Sigmoid colon (tissue), 7 donors: ENCODE measurements at regions of chr6 and their contacts with region 1.

Region 1: GRCh38 chr6:15621203-15622044 is 41.4 kb downstream of the DTNBP1 start:
- DNase-seq: peak; percentile 68
- H3K4me3 ChIP-seq: no peak overlapping the region
- H3K27ac ChIP-seq: peak overlapping the region in 3 of 4 donors; percentile 36 to 47 (median 39)
- H3K4me1 ChIP-seq: peaks cover 0 to 28% (median 15%) of the 10 kb centered on the region in 4 donors
- H3K27me3 ChIP-seq: no peaks in the 10 kb centered on the region
- CTCF ChIP-seq: no peak
- EP300 ChIP-seq: no peak
- POLR2A ChIP-seq: no peak

Region 2: DNA sequence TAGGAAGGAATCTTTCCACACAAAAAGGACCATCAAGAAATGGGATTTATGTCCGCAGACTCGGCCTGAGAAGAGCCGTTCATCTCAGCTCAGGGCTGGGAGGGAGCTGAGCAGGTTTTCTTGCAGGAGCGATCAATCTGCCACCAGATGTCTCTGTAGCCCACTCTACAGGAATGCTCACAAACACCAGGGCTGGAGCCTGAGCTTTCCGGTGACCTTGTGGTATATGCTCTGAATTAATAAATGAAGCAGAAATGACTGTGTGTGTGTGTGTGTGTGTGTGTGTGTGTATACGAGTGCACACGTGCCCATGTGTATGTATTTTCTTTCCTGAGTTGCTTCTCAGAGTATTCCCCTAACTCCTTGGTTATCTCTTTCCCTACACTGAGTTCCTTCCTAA is 1491.8 kb before region 1 on chr6:
- intact Hi-C with region 1: loop called (anchors 5 kb)
- DNase-seq: peak; percentile 67
- H3K4me3 ChIP-seq: no peak overlapping the region
- H3K27ac ChIP-seq: no peak overlapping the region
- H3K4me1 ChIP-seq: peaks cover 0 to 19% (median 15%) of the 10 kb centered on the region in 4 donors
- H3K27me3 ChIP-seq: no peaks in the 10 kb centered on the region
- CTCF ChIP-seq: peak in 3 of 4 experiments; percentile 33 to 52 (median 43)
- EP300 ChIP-seq: no peak
- POLR2A ChIP-seq: no peak

Region 3: DNA sequence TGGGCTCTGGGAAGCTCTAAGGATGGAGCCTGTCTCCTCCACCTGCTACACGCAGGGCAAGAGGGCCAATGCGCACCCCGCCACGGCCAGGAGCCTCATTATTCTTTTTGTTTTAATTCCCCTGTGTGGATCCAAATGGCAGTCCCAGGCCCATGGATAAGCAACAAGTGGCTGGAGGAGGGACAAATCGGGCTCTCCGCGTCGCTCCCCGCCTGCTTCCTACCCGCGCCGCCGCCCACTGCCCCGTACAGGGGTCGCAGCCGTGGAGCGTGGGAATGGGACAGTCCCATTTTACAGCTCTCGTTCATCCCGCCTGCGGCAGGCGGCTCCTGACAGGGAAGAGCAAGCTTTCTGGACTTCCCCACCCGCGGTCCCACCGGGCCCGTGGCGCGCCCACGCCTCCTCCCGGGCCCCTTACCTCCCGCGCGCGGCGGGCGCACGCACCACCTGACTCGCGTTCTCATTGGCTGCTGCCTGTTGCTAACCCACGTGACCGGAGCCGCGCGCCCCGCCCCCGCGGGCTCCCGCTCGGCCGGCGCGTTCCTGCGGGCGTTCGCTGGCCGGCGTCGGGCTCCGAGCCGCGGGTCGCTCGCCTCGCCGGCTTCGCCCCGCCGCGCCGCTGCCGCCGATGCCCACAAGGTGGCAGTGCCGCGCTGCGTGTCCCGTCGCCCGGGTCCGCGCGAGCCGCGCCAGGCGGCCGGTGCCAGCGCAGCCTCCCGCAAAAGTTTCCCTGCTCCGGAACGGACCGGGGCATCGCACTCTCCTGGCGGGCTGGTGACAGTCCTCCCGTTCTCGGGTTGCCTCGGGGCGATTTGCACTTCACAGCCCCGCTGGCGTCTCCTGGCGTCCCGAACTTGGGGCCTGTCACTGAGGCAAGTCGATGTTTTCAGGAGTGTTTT is 1410.5 kb before region 1 on chr6:
- intact Hi-C with region 1: loop called (anchors 2 kb)
- DNase-seq: peak; percentile 96
- H3K4me3 ChIP-seq: peak overlapping the region; percentile 62 to 72 (median 70)
- H3K27ac ChIP-seq: peak overlapping the region; percentile 76 to 84 (median 82)
- H3K4me1 ChIP-seq: peaks cover 0 to 14% (median 9%) of the 10 kb centered on the region in 4 donors
- H3K27me3 ChIP-seq: no peaks in the 10 kb centered on the region
- CTCF ChIP-seq: peak in 2 of 4 experiments; percentile 45 to 62
- EP300 ChIP-seq: peak in 1 of 4 donors; percentile 7
- POLR2A ChIP-seq: peak in 1 of 2 donors; percentile 42

Region 4: DNA sequence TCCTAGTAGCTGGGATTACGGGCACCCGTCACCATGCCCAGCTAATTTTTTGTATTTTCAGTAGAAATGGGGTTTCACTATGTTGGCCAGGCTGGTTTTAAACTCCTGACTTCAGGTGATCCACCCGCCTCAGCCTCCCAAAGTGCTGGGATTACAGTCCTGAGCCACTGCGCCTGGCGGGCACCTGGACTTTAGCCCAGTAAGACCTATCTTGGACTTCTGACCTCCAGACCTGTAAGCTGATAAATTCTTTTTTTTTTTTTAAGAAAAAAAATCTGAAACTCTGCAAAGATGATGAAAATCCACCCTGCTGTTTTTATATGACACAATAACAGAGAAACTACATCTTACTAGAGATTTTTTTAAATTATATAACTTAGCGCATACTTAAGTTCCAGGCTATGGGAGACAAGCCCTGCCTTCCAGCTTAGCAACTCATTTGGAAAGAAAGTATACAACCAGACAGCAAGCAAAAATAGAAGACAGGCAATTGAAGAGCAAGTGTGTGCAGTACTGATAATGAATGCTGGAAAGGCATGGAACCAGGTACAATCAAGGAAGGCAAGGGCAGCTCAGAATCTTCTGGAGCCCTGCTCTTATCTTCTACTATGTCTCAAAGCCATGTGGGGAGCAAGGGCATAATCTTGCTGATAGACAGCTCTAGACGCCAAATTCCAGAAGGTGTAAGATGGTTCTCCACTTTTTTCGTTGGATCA is 1399.7 kb before region 1 on chr6:
- intact Hi-C with region 1: no loop called
- DNase-seq: no peak
- H3K4me3 ChIP-seq: no peak overlapping the region
- H3K27ac ChIP-seq: no peak overlapping the region
- H3K4me1 ChIP-seq: no peaks in the 10 kb centered on the region
- H3K27me3 ChIP-seq: no peaks in the 10 kb centered on the region
- CTCF ChIP-seq: no peak
- EP300 ChIP-seq: no peak
- POLR2A ChIP-seq: no peak

Region 5: GRCh38 chr6:15254070-15254841 is 367.2 kb before region 1 on chr6:
- intact Hi-C with region 1: loop called (anchors 10 kb)
- DNase-seq: no peak
- H3K4me3 ChIP-seq: no peak overlapping the region
- H3K27ac ChIP-seq: no peak overlapping the region
- H3K4me1 ChIP-seq: peaks cover 0 to 49% (median 44%) of the 10 kb centered on the region in 4 donors
- H3K27me3 ChIP-seq: no peaks in the 10 kb centered on the region
- CTCF ChIP-seq: no peak
- EP300 ChIP-seq: no peak
- POLR2A ChIP-seq: no peak

Region 6: DNA sequence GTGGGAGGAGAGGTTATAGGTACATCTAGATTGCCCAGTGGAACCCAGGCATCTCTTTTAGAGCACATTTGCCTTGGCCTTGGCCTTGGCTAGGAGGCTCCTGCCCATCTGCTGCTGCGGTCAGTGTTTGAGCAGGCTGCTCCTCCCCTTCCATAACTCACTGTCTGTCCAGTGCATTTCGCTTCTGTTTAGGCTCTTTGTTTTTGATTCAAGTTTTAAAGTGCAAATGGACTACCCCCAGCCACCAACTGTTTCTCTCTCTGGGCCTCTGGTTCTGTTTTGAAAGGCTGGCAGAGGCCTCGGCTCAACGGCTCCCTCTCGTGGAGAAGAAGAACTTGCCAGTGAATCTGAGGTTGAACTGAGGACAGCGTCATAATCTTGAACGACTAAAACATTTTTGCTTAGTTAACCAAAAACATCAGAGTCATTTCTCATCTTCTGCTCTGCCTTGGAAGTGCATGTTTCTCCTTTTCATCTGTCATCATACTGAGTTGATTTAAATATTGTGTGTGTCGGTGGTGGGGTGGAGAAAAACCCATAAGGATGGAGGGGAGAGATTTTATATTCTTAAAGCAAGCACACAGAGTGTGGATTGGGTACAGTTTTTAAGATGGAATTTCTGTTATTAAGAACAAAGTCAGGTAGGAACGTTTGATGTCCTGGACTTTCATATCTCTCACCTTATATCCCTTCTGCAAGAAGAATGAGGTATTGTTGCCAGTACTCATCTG is 130.0 kb before region 1 on chr6:
- intact Hi-C with region 1: loop called (anchors 5 kb)
- DNase-seq: peak; percentile 90
- H3K4me3 ChIP-seq: no peak overlapping the region
- H3K27ac ChIP-seq: peak overlapping the region; percentile 4 to 51 (median 32)
- H3K4me1 ChIP-seq: peaks cover 0 to 28% (median 22%) of the 10 kb centered on the region in 4 donors
- H3K27me3 ChIP-seq: no peaks in the 10 kb centered on the region
- CTCF ChIP-seq: peak; percentile 73 to 94 (median 80)
- EP300 ChIP-seq: no peak
- POLR2A ChIP-seq: no peak